OCI-LY7 (cell line): ENCODE measurements at regions of chr7 and their contacts with region 1.

Region 1: DNA sequence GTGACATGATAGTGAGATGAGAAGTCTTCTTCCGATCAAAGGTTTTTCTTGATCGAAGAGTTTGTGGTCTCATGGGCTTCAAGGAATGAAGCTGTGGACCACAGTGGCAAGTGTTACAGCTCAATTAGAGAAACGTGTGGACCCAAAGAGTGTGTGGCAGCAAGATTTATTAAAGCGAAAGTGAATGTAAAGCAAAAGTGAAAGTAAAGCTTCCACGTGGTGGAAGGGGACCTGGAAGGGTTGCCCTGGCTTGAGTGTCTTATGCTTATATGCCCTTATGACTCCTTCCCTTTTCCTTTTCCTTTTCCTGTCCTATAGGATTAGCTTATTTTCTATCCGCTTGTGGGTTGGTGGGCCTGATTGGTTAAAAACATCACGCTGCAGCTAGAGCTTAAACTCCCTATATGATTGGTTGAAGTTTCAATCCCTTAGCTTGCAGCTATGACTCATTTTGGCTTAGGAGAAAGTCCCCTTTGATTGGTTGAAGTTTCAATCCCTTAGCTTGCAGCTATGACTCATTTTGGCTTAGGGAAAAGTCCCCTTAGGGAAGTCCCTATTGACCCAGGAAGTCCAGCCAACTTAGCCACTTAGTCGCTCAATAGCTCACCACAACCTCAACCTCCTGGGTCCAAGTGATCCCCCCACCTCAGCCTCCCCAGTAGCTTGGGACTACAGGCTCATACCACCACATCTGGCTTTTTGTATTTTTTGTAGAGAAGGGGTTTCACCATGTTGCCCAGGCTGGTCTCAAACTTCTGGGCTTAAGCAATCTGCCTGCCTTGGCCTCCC is 34.7 kb downstream of the MRPS24 start:
- DNase-seq: peak; percentile 53
- H3K4me3 ChIP-seq: peak overlapping the region; percentile 54
- H3K27ac ChIP-seq: no peak overlapping the region
- H3K4me1 ChIP-seq: peaks cover 10% of the 10 kb centered on the region
- CTCF ChIP-seq: no peak

Region 2: DNA sequence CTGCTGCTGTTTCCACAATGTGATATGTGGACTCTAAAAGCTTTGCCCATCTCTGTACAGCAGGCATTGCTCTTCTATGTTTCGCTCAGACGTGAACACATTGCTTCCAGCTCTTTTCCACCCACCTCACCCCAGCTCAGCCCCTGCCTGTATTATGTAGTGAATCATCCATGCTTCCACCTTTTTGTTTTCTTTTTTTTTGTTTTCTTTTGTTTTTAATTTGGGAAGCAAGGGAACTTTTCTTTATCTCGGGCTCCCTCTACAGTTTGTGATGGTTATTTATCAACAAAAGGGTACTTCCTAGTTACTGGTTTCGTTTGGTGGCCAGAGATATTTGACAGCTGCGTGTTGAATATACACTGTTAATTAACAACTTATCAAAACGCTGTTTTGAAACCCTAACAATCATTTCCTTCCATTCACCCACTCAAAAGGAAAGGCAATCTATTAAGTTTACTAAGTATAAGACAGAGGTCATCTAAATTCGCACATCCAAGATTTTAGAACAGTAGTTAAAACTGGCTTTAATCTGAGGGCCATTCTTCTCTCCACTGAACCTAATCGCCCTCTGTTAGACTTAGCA is 379.6 kb before region 1 on chr7:
- CTCF ChIA-PET with region 1: no interaction called
- POLR2A ChIA-PET with region 1: no interaction called
- intact Hi-C with region 1: loop called (anchors 10 kb)
- DNase-seq: peak; percentile 46
- H3K4me3 ChIP-seq: no peak overlapping the region
- H3K27ac ChIP-seq: no peak overlapping the region
- H3K4me1 ChIP-seq: no peaks in the 10 kb centered on the region
- CTCF ChIP-seq: peak; percentile 82

Region 3: GRCh38 chr7:43869006-43869866 is 34.6 kb after region 1 on chr7 and contains the start of gene MRPS24:
- CTCF ChIA-PET with region 1: no interaction called
- POLR2A ChIA-PET with region 1: no interaction called
- intact Hi-C with region 1: no loop called
- DNase-seq: peak; percentile 96
- H3K4me3 ChIP-seq: peak within 1 kb of the TSS; percentile 75
- H3K27ac ChIP-seq: peak within 1 kb of the TSS; percentile 3
- H3K4me1 ChIP-seq: peaks cover 14% of the 10 kb centered on the region
- CTCF ChIP-seq: no peak
- total RNA-seq, gene MRPS24: 60.6 and 65.1 TPM in 2 replicates